ENCODE measurements at regions of chr2 and their contacts with region 1.

Region 1: DNA sequence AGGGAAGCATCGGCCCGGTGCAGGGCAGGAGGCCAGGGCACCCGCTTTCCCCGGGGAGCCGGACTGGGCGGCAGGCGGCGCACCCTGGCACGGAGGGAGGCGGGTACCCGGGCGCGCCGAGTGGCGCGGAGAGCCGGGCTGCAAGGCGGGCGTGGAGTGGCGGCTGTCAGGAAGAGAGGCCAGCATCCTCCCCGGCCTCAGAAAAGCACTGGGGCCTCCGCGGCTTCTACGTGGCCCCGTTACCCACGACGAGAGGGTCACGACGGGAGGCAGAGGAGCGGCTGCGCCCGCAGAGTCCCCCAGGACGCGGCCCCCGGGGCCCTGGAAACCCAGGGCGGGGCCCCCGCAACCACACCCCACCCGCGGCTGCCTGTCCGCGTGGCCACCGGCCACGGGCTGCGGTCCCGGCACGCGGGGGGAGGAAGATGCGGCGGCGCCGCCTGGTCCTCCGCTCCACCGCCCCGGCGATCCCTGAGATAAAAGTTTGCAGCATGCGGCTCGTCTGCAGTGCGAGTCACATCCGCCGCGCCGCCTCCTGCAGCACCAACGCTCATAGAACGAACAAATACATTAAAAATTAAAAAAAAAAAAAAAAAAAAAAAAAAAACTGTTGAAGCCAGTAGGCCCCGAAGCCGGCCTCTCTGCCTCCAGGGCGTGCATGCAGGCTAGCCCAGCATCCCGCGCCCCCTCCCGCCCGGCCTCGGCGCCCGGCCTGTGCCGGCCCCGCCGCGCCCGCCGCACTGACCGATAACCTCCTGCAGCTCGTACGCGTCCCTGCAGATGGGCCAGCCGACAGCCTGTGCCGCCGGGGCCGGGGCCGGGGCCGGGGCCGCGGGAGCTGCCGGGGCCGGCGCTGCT is 683 bp downstream of the STK39 start:
- DNase-seq: peak; percentile 64 to 84 (median 79)
- ATAC-seq: peak; percentile 73
- H3K4me3 ChIP-seq: peak overlapping the region; percentile 74
- H3K4me3 Mint-ChIP-seq: peak overlapping the region; percentile 71 to 95 (median 93)
- H3K27ac ChIP-seq: peak overlapping the region; percentile 77
- H3K27ac Mint-ChIP-seq: peak overlapping the region; percentile 75 to 94 (median 93)
- H3K4me1 ChIP-seq: peaks cover 27 to 30% of the 10 kb centered on the region in 2 donors
- H3K4me1 Mint-ChIP-seq: peaks cover 16 to 49% (median 42%) of the 10 kb centered on the region in 7 donors
- H3K27me3 ChIP-seq: no peaks in the 10 kb centered on the region
- H3K27me3 Mint-ChIP-seq: peaks cover 0 to 11% (median 0%) of the 10 kb centered on the region in 5 donors

Region 2: DNA sequence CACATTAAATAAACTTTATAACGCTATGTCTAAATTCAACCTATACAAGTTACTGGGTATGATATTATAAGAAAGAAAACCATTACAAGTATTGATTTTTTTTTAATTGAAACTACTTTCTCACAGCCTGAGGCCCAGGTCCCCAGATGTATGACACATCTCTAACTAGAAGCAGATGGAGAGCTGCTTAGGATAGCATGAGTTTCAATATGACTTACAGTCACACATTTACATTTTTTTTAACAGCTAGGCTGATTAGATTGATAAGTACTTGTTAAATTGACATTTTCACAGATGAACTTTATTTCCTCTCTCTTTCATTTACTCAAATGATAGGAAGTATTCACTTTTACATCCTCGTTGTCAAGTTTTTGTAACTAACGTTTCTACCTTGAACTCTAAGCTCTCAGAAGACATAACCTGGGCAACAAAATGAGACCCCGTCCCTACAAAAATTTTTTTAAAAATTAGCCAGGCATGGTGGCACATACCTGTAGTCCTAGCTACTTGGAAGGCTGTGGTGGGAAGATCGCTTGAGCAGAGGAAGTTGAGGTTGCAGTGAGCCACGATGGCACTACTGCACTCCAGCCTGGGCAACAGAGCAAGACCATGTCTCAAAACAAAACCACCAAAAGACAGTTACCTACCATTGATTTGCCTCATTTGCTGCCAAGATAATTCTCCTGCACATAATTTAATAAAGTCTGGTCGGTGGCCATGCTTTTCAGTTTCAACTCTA is 51.8 kb before region 1 on chr2:
- CTCF ChIA-PET with region 1: no interaction called
- POLR2A ChIA-PET with region 1: no interaction called
- intact Hi-C with region 1: loop called (anchors 1 to 2 kb)
- DNase-seq: peak in 3 of 9 donors; percentile 6 to 11 (median 7)
- ATAC-seq: peak; percentile 66
- H3K4me3 ChIP-seq: peak overlapping the region; percentile 14
- H3K4me3 Mint-ChIP-seq: peak overlapping the region; percentile 18 to 78 (median 61)
- H3K27ac ChIP-seq: peak overlapping the region; percentile 14
- H3K27ac Mint-ChIP-seq: peak overlapping the region; percentile 10 to 91 (median 80)
- H3K4me1 ChIP-seq: peaks cover 34 to 50% of the 10 kb centered on the region in 2 donors
- H3K4me1 Mint-ChIP-seq: peaks cover 49 to 90% (median 73%) of the 10 kb centered on the region in 7 donors
- H3K27me3 ChIP-seq: no peaks in the 10 kb centered on the region
- H3K27me3 Mint-ChIP-seq: no peaks in the 10 kb centered on the region

Region 3: DNA sequence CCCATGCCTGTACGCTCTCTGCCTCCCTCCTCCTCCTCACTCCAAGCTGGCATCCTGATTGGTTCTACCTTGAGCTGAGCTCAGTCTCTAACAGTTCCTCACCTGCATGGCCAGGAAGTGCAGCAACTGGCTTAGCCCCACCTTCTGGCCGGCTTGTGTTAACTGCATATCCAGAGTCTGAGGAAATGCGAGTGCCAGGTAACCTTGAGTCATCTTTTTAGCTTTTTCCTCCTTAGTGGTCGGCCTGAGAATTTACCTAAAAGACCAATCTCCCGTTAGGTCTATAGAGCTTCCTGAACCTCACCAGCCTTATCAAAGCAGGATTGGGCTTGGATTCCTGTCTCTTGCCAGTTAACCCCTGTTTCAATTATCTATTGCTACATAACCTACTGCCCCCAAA is 90.2 kb after region 1 on chr2:
- CTCF ChIA-PET with region 1: no interaction called
- POLR2A ChIA-PET with region 1: no interaction called
- intact Hi-C with region 1: loop called (anchors 1 kb)
- DNase-seq: peak in 8 of 9 donors; percentile 11 to 58 (median 48)
- ATAC-seq: peak; percentile 93
- H3K4me3 ChIP-seq: no peak overlapping the region
- H3K4me3 Mint-ChIP-seq: peak overlapping the region in 1 of 10 donors; percentile 5
- H3K27ac ChIP-seq: no peak overlapping the region
- H3K27ac Mint-ChIP-seq: no peak overlapping the region
- H3K4me1 ChIP-seq: no peaks in the 10 kb centered on the region
- H3K4me1 Mint-ChIP-seq: peaks cover 0 to 4% (median 0%) of the 10 kb centered on the region in 7 donors
- H3K27me3 ChIP-seq: no peaks in the 10 kb centered on the region
- H3K27me3 Mint-ChIP-seq: peaks cover 0 to 10% (median 0%) of the 10 kb centered on the region in 5 donors

Region 4: GRCh38 chr2:168751104-168751740 is 504.5 kb after region 1 on chr2:
- CTCF ChIA-PET with region 1: no interaction called
- POLR2A ChIA-PET with region 1: no interaction called
- intact Hi-C with region 1: loop called in 1 of 2 experiments (anchors 5 kb)
- DNase-seq: peak in 7 of 9 donors; percentile 52 to 81 (median 75)
- ATAC-seq: peak; percentile 97
- H3K4me3 ChIP-seq: peak overlapping the region; percentile 0
- H3K4me3 Mint-ChIP-seq: peak overlapping the region; percentile 21 to 69 (median 64)
- H3K27ac ChIP-seq: peak overlapping the region; percentile 48
- H3K27ac Mint-ChIP-seq: peak overlapping the region; percentile 65 to 92 (median 89)
- H3K4me1 ChIP-seq: peaks cover 29 to 70% of the 10 kb centered on the region in 2 donors
- H3K4me1 Mint-ChIP-seq: peaks cover 35 to 91% (median 86%) of the 10 kb centered on the region in 7 donors
- H3K27me3 ChIP-seq: no peaks in the 10 kb centered on the region
- H3K27me3 Mint-ChIP-seq: no peaks in the 10 kb centered on the region

Region 5: DNA sequence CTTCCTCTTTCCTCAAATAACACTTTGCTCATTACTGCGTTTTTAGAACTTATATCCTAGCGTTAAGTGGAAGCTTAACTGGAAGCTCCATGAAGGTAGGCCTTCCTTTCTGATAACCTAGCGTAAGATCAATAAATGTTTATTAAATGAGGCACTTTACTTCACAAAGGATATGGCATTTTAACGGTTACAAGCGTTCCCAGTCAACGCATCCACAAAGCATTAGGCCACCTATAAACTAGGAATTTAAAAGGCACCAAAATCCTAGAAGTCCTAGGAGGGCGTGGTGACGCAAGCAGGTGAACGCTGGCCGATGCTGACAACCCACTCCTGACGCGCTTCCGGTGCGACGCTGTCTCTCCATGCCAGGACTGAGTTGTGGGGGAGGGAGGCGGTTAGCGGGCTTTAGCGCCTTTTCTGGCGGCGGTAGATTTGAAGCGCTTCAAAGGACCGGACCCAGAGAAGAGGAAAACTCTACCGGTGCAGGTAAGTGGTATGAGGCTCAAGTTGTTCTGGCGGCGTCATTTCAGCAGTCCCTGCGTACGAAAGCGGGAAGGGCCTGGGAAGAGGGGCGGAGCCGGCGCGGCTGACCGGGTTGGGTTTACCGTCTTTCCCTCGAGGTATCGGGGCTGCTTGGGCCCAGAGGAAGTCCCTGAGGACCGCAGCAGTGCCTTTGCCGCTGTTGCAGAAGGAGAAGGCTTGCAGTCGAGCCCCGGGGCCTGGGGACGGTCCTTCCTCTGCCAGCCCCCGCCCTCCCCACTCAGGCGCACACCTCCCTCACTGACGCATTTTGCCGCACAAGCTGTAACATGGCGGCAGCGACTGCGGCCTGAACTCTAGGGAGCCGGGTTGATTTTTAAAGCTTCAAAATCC is 1337.5 kb after region 1 on chr2 and contains the start of gene PPIG:
- CTCF ChIA-PET with region 1: no interaction called
- POLR2A ChIA-PET with region 1: no interaction called
- intact Hi-C with region 1: loop called in 1 of 2 experiments (anchors 5 kb)
- DNase-seq: peak; percentile 71 to 90 (median 85)
- ATAC-seq: peak; percentile 94
- H3K4me3 ChIP-seq: peak within 1 kb of the TSS; percentile 89
- H3K4me3 Mint-ChIP-seq: peak within 1 kb of the TSS; percentile 90 to 100 (median 99)
- H3K27ac ChIP-seq: peak within 1 kb of the TSS; percentile 99
- H3K27ac Mint-ChIP-seq: peak within 1 kb of the TSS; percentile 97 to 100 (median 100)
- H3K4me1 ChIP-seq: peaks cover 17 to 29% of the 10 kb centered on the region in 2 donors
- H3K4me1 Mint-ChIP-seq: peaks cover 12 to 46% (median 40%) of the 10 kb centered on the region in 7 donors
- H3K27me3 ChIP-seq: no peaks in the 10 kb centered on the region
- H3K27me3 Mint-ChIP-seq: peaks cover 0 to 4% (median 0%) of the 10 kb centered on the region in 5 donors
- total RNA-seq, gene PPIG: 50.6 to 86.1 (median 73.7) TPM